Naive thymus-derived CD4-positive, alpha-beta T cell (primary cell): ENCODE measurements at regions of chr11 and their contacts with region 1.

Region 1: DNA sequence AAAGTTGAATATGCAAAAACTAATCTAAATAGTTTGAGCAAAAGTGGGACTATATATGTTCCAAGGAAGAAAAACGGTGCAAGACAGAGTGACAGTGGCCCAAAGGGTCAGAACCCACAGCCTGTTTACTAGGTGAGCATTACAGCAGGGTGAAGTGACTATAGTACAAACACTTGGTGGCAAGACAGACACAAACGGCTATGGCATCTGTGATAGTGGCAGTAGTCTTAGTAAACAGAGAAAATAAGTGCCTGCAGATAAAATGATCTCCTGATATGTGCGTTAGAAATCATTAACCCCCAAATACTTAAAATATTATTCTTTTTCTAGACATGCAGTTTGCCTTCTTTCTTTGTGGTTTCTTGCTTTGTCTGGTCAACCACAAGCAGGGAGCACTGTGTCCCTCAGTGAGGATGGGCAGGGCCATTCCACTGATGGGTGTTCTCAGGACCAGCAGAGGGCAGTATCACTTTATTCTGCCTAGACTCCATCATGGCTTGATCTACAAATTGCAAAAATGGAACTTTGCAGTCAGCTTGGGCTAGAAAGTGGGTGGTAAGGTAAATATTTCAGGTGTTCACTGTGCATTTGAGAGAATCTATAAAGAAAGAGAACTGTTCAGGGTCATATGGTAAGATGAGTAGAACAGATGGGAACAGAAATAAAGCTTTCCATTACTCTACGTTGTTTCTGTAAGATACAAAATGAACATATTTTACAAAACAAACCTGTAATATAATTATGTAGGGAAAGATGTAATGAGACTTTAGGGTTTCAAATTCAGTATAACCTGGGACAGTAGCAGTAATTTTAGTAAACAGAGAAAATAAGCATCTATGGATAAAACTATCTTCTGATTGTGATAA is 198.2 kb downstream of the SWAP70 start:
- DNase-seq: peak in 7 of 9 donors; percentile 5 to 37 (median 31)
- ATAC-seq: peak; percentile 85
- H3K4me3 ChIP-seq: no peak overlapping the region
- H3K4me3 Mint-ChIP-seq: no peak overlapping the region
- H3K27ac ChIP-seq: no peak overlapping the region
- H3K27ac Mint-ChIP-seq: no peak overlapping the region
- H3K4me1 ChIP-seq: peaks cover 0 to 9% of the 10 kb centered on the region in 2 donors
- H3K4me1 Mint-ChIP-seq: peaks cover 9 to 41% (median 27%) of the 10 kb centered on the region in 7 donors
- H3K27me3 ChIP-seq: no peaks in the 10 kb centered on the region
- H3K27me3 Mint-ChIP-seq: no peaks in the 10 kb centered on the region

Region 2: GRCh38 chr11:9840460-9841004 is 21.6 kb before region 1 on chr11:
- CTCF ChIA-PET with region 1: no interaction called
- POLR2A ChIA-PET with region 1: no interaction called
- intact Hi-C with region 1: loop called in 1 of 2 experiments (anchors 2 kb)
- DNase-seq: peak in 2 of 9 donors; percentile 9 to 25
- ATAC-seq: peak; percentile 38
- H3K4me3 ChIP-seq: no peak overlapping the region
- H3K4me3 Mint-ChIP-seq: peak overlapping the region in 8 of 10 donors; percentile 33 to 67 (median 55)
- H3K27ac ChIP-seq: no peak overlapping the region
- H3K27ac Mint-ChIP-seq: peak overlapping the region in 8 of 9 donors; percentile 65 to 80 (median 72)
- H3K4me1 ChIP-seq: peaks cover 5 to 17% of the 10 kb centered on the region in 2 donors
- H3K4me1 Mint-ChIP-seq: peaks cover 19 to 50% (median 38%) of the 10 kb centered on the region in 7 donors
- H3K27me3 ChIP-seq: no peaks in the 10 kb centered on the region
- H3K27me3 Mint-ChIP-seq: peaks cover 0 to 2% (median 0%) of the 10 kb centered on the region in 5 donors

Region 3: DNA sequence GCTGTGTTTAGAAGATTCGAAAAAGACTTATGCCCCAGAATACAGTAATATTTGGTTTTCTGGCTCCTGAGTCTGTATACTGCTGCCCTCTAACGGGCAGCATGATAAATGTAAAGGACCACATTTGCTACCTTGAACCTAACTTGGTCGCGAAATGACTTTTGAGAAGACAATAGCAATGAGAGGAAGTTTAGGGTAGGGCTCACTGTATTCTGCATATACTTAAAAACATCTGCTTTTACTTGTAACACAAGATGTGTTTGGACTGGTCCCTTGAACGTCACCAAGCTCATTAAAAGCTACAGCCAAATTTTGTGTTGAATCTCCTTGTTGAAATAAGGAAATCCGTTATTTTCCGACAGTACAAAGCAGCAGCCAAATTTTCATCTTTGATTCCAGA is 110.9 kb after region 1 on chr11:
- CTCF ChIA-PET with region 1: no interaction called
- POLR2A ChIA-PET with region 1: no interaction called
- intact Hi-C with region 1: loop called in 1 of 2 experiments (anchors 1 kb)
- DNase-seq: peak in 5 of 9 donors; percentile 10 to 42 (median 24)
- ATAC-seq: peak; percentile 72
- H3K4me3 ChIP-seq: no peak overlapping the region
- H3K4me3 Mint-ChIP-seq: no peak overlapping the region
- H3K27ac ChIP-seq: no peak overlapping the region
- H3K27ac Mint-ChIP-seq: no peak overlapping the region
- H3K4me1 ChIP-seq: no peaks in the 10 kb centered on the region
- H3K4me1 Mint-ChIP-seq: peaks cover 0 to 2% (median 0%) of the 10 kb centered on the region in 7 donors
- H3K27me3 ChIP-seq: no peaks in the 10 kb centered on the region
- H3K27me3 Mint-ChIP-seq: no peaks in the 10 kb centered on the region

Region 4: GRCh38 chr11:10322830-10323792 is 461.0 kb after region 1 on chr11:
- CTCF ChIA-PET with region 1: no interaction called
- POLR2A ChIA-PET with region 1: no interaction called
- intact Hi-C with region 1: loop called (anchors 1 kb)
- DNase-seq: peak in 8 of 9 donors; percentile 10 to 70 (median 48)
- ATAC-seq: peak; percentile 70
- H3K4me3 ChIP-seq: no peak overlapping the region
- H3K4me3 Mint-ChIP-seq: peak overlapping the region in 1 of 10 donors; percentile 26
- H3K27ac ChIP-seq: no peak overlapping the region
- H3K27ac Mint-ChIP-seq: peak overlapping the region in 5 of 9 donors; percentile 16 to 82 (median 55)
- H3K4me1 ChIP-seq: no peaks in the 10 kb centered on the region
- H3K4me1 Mint-ChIP-seq: peaks cover 0 to 11% (median 3%) of the 10 kb centered on the region in 7 donors
- H3K27me3 ChIP-seq: no peaks in the 10 kb centered on the region
- H3K27me3 Mint-ChIP-seq: peaks cover 4 to 20% (median 8%) of the 10 kb centered on the region in 5 donors